Activated CD4-positive, alpha-beta T cell treated with anti-CD3 and anti-CD28 coated beads for 36 hours (primary cell): ENCODE measurements at regions of chr11 and their contacts with region 1.

Region 1: DNA sequence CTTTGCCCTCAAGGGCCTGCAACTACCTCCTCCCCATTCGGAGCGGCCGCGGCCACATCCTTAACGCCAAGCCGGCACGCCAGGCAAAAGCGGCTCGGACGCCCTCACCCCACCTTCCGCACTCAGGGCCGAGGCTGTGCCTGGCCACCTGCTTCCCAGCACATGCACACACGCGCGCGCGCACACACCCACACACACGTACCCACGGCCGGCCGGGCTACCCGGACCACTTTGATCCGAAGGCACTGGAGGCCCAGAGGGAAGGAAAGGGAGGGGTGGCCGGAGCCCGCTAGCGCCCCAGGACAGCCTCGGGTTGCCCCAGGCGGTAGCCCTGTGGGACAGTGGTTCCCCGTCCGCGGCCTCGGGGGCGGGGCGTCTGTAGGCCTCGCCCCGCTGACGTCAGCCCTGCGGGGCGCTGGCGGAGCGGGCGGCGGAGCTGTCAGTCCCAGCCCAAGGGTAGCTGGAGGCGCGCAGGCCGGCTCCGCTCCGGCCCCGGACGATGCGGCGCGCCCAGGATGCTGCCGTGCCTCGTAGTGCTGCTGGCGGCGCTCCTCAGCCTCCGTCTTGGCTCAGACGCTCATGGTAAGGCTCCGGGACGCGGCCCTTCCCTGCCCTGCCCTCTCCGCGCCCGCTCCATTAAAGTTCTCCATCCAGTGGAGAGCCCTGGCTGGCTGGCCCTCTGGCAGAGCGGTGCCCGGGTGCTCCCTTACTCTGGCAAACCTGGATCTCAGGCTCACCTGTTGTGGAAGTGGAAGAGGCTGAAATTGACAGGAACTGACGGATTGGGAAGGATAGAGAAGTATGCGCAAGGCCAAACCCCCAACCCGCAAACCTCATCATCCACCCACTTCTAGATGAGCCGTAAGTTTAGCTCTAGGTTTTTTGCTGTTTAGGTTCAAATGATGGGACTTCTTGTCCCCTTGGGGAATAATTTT is at the start of gene IL10RA:
- DNase-seq: peak; percentile 90
- ATAC-seq: peak; percentile 80
- H3K4me3 Mint-ChIP-seq: peak within 1 kb of the TSS; percentile 96
- H3K27ac Mint-ChIP-seq: peak within 1 kb of the TSS; percentile 96
- H3K4me1 Mint-ChIP-seq: peaks cover 76% of the 10 kb centered on the region
- H3K27me3 Mint-ChIP-seq: no peaks in the 10 kb centered on the region
- total RNA-seq, gene IL10RA: 57.1 to 79.4 TPM

Region 2: DNA sequence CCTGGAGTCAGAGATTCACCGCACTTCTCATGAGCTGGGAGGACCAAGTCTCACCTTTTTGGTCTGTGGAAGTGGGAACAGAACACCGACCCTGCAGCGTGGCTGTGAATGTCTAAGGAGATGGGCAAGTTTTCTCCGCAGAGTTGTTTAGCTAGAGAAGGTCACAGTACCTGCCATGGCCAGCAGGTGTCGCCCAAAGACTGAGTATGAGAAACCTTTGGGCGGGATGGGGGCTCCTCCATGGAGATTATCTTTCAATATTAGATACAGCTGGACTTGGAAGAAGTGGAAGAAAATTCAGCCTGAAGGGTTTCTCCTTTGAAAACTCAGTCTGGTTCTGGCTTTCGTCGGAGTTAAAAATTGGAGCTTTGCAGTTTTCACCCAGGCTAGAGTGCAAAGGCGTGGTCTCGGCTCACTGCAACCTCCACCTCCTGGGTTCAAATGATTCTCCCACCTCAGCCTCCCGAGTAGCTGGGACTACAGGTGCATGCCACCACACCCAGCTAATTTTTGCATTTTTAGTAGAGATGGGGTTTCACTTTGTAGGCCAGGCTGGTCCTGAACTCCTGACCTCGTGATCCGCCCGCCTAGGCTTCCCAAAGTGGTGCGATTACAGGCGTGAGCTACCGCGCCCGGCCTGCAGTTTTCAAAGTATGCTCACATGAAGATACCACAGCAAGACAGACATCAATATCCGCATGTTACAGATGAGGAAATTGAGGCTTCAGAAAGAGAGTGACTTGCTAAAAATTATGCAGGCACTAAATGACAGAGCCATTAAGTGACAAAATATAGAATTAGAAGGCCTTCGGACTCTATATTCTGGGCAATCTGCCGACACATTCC is 178.5 kb before region 1 on chr11:
- CTCF ChIA-PET with region 1: interaction called, 11 read pairs
- POLR2A ChIA-PET with region 1: no interaction called
- intact Hi-C with region 1: no loop called
- DNase-seq: peak; percentile 87
- ATAC-seq: peak; percentile 56
- H3K4me3 Mint-ChIP-seq: no peak overlapping the region
- H3K27ac Mint-ChIP-seq: no peak overlapping the region
- H3K4me1 Mint-ChIP-seq: peaks cover 15% of the 10 kb centered on the region
- H3K27me3 Mint-ChIP-seq: peaks cover 3% of the 10 kb centered on the region

Region 3: GRCh38 chr11:117970400-117971024 is 15.7 kb before region 1 on chr11:
- CTCF ChIA-PET with region 1: interaction called, 8 read pairs
- POLR2A ChIA-PET with region 1: interaction called, 17 read pairs
- intact Hi-C with region 1: loop called in 1 of 2 experiments (anchors 2 kb)
- DNase-seq: peak; percentile 56
- ATAC-seq: peak; percentile 69
- H3K4me3 Mint-ChIP-seq: peak overlapping the region; percentile 4
- H3K27ac Mint-ChIP-seq: peak overlapping the region; percentile 74
- H3K4me1 Mint-ChIP-seq: peaks cover 65% of the 10 kb centered on the region
- H3K27me3 Mint-ChIP-seq: no peaks in the 10 kb centered on the region

Region 4: DNA sequence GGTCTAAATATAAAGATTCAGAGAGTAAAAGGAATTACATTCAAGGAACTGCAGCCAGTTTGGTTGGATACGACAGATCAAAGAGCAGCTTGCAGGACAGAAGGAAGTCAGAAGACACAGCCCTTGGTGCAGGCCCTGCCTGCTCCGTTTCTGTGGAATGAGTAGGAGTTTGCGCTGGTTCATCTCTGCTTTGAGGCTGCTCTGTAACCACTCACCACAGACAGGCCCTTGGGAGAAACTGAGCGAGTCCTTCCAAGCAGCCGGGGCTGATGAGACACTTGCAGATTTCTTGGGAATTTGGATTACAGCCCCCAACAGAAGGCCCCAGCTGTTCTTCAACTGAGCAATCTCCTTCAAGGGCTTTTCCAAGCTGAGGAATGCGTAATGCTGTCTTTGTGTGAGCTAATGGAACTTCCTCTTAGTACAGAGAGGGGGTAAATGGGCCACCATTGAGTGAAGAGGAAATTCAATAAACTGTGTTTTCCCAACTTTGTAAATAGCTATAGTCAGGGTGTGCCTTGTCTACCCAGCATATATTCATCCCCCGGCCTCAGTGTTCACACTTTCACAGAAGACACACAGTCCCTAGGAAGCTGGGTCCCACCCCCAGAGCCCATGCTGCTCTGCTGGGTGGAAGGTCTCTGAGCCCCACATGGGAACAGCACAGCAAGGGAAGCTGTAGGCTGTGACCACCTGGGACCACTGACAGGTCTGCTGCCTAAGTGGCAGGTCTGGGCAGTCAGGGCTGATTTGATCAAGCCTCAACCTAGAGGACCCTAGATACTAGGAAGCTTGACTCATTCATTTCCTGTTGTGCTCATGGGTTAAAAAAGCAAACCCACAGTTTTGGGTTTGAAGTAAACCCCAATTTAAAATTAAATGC is 16.6 kb after region 1 on chr11:
- CTCF ChIA-PET with region 1: interaction called, 31 read pairs
- POLR2A ChIA-PET with region 1: interaction called, 78 read pairs
- intact Hi-C with region 1: loop called (anchors 1 kb)
- DNase-seq: peak; percentile 85
- ATAC-seq: peak; percentile 67
- H3K4me3 Mint-ChIP-seq: peak overlapping the region; percentile 38
- H3K27ac Mint-ChIP-seq: peak overlapping the region; percentile 97
- H3K4me1 Mint-ChIP-seq: peaks cover 94% of the 10 kb centered on the region
- H3K27me3 Mint-ChIP-seq: no peaks in the 10 kb centered on the region

Region 5: DNA sequence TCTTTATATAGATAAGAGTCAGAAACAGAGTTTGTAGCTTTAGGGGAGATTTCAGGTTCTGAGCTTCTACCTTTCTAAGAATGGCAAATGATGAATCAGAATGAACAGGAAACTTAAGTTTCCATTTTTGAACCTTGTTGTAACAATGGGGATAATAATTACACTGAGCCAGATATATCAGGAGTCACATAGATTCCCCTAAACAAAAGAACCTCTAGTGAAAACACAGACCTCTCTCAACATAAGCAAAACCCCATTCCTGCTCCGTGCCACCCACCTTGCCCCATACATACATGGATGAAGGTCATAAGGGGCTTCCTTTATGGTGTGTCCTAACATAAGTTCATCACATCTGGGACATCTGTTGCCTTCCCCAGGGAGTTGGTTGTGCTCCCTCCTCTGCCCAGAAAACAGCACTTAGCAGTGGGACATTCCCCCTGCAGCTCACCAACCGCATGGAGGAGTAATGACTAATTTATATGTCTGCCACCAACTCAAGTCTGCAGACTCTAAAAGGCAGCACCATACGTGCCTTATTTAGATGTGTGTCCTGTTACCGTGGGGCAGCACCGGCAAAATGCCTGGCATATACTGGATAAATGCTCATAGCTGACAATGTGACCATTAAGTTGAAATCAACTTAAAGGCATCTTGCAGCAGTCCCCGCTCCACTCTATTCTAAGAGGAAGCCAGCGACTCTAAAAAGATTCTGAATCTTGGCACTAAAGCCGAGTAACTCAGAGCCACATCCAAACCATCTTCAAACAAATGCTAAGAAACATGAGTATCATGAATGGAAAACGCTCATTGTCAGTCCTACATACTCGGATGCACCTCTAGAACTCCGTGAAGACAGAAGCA is 230.6 kb after region 1 on chr11:
- CTCF ChIA-PET with region 1: no interaction called
- POLR2A ChIA-PET with region 1: no interaction called
- intact Hi-C with region 1: loop called in 1 of 2 experiments (anchors 5 kb)
- DNase-seq: peak; percentile 76
- ATAC-seq: peak; percentile 73
- H3K4me3 Mint-ChIP-seq: peak overlapping the region; percentile 76
- H3K27ac Mint-ChIP-seq: peak overlapping the region; percentile 100
- H3K4me1 Mint-ChIP-seq: peaks cover 97% of the 10 kb centered on the region
- H3K27me3 Mint-ChIP-seq: no peaks in the 10 kb centered on the region